ENCODE measurements at regions of chr19 and their contacts with region 1.

Region 1: GRCh38 chr19:39671738-39672363 is 16.1 kb downstream of the LGALS16 start:
- DNase-seq: peak; percentile 78
- H3K4me3 Mint-ChIP-seq: no peak overlapping the region
- H3K27ac Mint-ChIP-seq: no peak overlapping the region
- H3K4me1 Mint-ChIP-seq: peaks cover 35% of the 10 kb centered on the region
- H3K27me3 Mint-ChIP-seq: peaks cover 1% of the 10 kb centered on the region

Region 2: GRCh38 chr19:39445265-39446111 is 226.4 kb before region 1 on chr19 and contains the start of gene SUPT5H:
- CTCF ChIA-PET with region 1: interaction called, 7 read pairs
- intact Hi-C with region 1: loop called (anchors 1 kb)
- DNase-seq: peak; percentile 99
- H3K4me3 Mint-ChIP-seq: peak within 1 kb of the TSS; percentile 99
- H3K27ac Mint-ChIP-seq: peak within 1 kb of the TSS; percentile 96
- H3K4me1 Mint-ChIP-seq: peaks cover 49% of the 10 kb centered on the region
- H3K27me3 Mint-ChIP-seq: no peaks in the 10 kb centered on the region
- total RNA-seq, gene SUPT5H: 129 to 139 TPM

Region 3: DNA sequence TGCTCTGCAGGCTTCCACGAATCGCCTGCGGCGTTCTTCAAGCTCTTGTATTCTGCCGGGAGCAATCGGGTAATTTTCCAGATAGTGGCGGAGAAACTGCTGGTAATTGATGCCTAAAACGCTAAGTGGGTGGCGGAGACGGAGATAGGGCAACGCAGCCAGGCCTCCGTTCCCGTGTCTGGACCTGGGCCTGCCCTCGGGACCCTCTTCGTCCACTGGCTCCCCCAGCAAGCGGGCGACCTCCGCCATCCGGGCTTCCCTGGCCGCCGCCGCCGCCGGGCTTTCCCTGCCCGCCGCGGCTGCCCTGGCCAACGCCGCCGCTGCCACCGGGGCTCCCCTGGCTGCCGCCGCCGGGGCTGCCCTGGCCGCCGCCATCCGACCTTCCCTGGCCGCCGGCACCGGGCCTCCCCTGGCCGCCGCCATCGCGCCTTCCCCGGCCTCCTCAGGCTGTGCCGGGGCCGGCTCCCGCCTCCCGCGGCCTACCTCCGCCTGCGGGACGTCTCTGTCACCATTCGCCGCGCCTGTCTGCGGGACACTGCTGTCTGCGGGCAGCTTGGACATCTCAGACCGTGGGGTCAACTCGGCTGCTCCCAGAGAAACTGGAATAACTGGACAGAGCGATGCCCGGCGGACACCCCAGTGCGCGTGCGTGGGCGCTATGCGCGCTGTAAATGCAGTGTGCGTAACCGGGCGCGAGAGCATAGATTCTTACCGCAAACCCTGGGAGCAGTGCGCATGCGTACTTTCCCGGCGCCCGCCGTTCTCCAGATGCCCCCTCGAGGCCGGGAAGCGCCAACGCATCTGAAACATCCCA is 132.1 kb before region 1 on chr19 and contains the start of gene EID2:
- CTCF ChIA-PET with region 1: interaction called, 38 read pairs
- intact Hi-C with region 1: no loop called
- DNase-seq: peak; percentile 97
- H3K4me3 Mint-ChIP-seq: peak within 1 kb of the TSS; percentile 93
- H3K27ac Mint-ChIP-seq: peak within 1 kb of the TSS; percentile 97
- H3K4me1 Mint-ChIP-seq: peaks cover 61% of the 10 kb centered on the region
- H3K27me3 Mint-ChIP-seq: no peaks in the 10 kb centered on the region
- total RNA-seq, gene EID2: 7.7 to 9.1 TPM

Region 4: DNA sequence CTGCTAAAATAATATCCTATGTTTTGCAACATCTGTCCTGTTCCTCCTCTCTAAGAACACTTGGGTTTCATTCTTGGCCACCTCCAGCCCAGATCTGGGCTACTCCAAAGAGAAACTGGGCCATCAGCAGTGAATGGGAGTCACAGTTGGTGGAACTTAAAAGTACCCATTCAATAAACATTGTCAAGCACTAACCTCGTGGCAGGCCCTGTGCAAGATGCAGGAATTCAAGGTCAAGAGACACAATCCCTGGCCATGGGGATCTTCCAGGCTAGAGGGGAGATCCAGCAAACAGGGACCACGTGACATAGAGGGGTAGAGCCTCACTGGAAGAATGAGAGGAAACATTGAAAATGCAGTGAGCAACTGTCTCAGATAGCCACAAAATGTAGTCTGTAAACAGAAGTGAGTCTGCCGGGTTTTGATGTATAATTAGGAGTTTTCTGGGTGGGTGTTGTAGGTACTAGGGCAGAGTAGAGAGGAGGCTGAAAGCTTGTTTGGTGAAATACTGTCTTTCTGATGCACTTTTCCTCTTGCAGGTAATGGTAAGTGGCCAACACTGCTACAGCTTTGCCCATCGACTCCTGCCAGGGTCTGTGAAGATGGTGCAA is 117.0 kb before region 1 on chr19:
- CTCF ChIA-PET with region 1: interaction called, 92 read pairs
- intact Hi-C with region 1: loop called (anchors 1 kb)
- DNase-seq: no peak
- H3K4me3 Mint-ChIP-seq: no peak overlapping the region
- H3K27ac Mint-ChIP-seq: no peak overlapping the region
- H3K4me1 Mint-ChIP-seq: peaks cover 33% of the 10 kb centered on the region
- H3K27me3 Mint-ChIP-seq: no peaks in the 10 kb centered on the region

Region 5: GRCh38 chr19:39765091-39766076 is 93.5 kb after region 1 on chr19:
- CTCF ChIA-PET with region 1: interaction called, 44 read pairs
- intact Hi-C with region 1: loop called (anchors 1 kb)
- DNase-seq: peak; percentile 48
- H3K4me3 Mint-ChIP-seq: no peak overlapping the region
- H3K27ac Mint-ChIP-seq: no peak overlapping the region
- H3K4me1 Mint-ChIP-seq: no peaks in the 10 kb centered on the region
- H3K27me3 Mint-ChIP-seq: no peaks in the 10 kb centered on the region